ENCODE measurements at regions of chr18 and their contacts with region 1.

Region 1: DNA sequence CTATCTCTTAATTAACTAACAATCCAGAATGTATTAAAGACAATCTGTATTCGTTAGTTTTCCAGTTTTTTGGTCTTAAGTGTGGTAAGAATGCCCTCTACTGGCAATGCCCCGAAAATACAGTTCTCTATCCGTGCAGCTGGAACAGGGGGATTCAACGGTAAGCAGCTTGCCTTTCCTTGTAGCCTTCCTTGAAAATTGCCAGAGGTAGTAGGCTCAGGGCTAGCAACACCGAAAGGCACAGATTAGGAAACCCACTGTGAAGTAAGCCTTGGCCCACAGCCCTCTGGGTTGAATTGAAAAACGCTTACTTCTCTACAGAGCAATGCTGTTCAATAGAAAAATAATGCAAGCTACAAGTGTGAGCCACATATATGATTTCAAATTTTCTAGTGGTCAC is 17.1 kb upstream of the VPS4B start:
- DNase-seq: peak; percentile 25 to 52
- H3K4me3 ChIP-seq: no peak overlapping the region
- H3K27ac ChIP-seq: no peak overlapping the region
- H3K4me1 ChIP-seq: peaks cover 11% of the 10 kb centered on the region
- H3K27me3 ChIP-seq: no peaks in the 10 kb centered on the region
- CTCF ChIP-seq: peak; percentile 89

Region 2: GRCh38 chr18:63131106-63131958 is 308.0 kb before region 1 on chr18:
- CTCF ChIA-PET with region 1: no interaction called
- POLR2A ChIA-PET with region 1: no interaction called
- intact Hi-C with region 1: loop called (anchors 10 kb)
- DNase-seq: peak in 1 of 2 experiments; percentile 7
- H3K4me3 ChIP-seq: no peak overlapping the region
- H3K27ac ChIP-seq: no peak overlapping the region
- H3K4me1 ChIP-seq: no peaks in the 10 kb centered on the region
- H3K27me3 ChIP-seq: no peaks in the 10 kb centered on the region
- CTCF ChIP-seq: peak; percentile 68

Region 3: DNA sequence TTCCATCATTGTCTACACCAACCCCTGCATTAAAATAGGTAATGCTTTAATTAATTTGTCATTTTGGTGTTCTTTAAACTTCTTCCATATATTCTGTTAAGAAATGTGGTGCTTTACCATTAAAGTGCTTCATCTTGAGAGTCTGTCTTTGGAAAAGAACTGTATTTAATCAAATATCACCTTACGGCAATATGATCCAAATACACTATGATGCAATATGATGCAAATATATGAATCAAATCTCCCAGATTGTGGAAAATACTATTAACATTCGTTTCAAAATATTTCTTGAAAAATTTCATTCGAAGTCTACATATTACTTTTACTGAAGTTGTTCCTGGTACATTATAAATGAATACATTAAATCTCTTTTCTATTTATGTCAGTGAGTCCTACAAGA is 40.0 kb before region 1 on chr18:
- CTCF ChIA-PET with region 1: no interaction called
- POLR2A ChIA-PET with region 1: no interaction called
- intact Hi-C with region 1: loop called (anchors 1 kb)
- DNase-seq: no peak
- H3K4me3 ChIP-seq: no peak overlapping the region
- H3K27ac ChIP-seq: no peak overlapping the region
- H3K4me1 ChIP-seq: no peaks in the 10 kb centered on the region
- H3K27me3 ChIP-seq: no peaks in the 10 kb centered on the region
- CTCF ChIP-seq: no peak

Region 4: DNA sequence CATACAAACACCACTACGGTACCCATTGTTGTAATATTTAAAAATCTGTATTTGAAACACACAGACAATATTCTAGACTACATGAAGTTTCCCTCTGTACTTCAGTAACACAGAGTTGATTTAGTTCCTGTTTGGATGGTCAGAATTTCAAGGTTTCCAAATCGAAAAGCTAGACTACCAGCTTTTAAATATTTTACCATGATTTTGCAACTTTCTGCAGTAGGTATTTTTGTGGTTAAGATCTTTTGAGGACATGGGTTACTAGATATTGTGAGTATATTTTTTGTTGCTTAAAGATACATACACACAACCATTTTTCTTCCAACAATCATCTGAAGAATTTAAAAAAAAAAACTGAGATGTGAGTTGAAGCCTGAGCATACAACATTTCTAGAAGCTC is 48.3 kb after region 1 on chr18:
- CTCF ChIA-PET with region 1: no interaction called
- POLR2A ChIA-PET with region 1: no interaction called
- intact Hi-C with region 1: no loop called
- DNase-seq: no peak
- H3K4me3 ChIP-seq: no peak overlapping the region
- H3K27ac ChIP-seq: no peak overlapping the region
- H3K4me1 ChIP-seq: no peaks in the 10 kb centered on the region
- H3K27me3 ChIP-seq: no peaks in the 10 kb centered on the region
- CTCF ChIP-seq: no peak

Region 5: DNA sequence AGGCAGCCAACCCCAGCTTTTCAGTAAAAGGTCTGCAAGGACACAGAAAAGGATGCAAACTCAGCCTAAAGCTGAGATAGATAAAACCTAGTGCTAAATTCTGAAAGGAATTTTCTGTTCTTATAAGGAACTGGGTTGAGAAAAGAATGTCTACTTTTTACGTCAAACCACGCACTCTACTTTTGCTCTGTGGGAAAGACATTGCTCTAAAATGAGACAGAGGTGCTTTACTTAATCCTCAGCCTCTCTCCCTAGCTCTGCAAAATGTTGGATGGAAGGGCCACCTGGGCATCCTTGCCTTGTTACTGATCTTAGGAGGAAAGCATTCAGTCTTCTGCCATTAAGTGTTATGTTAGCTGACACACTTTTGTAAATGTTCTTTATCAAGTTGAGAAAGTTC is 781.6 kb after region 1 on chr18:
- CTCF ChIA-PET with region 1: no interaction called
- POLR2A ChIA-PET with region 1: no interaction called
- intact Hi-C with region 1: no loop called
- DNase-seq: no peak
- H3K4me3 ChIP-seq: no peak overlapping the region
- H3K27ac ChIP-seq: no peak overlapping the region
- H3K4me1 ChIP-seq: no peaks in the 10 kb centered on the region
- H3K27me3 ChIP-seq: no peaks in the 10 kb centered on the region
- CTCF ChIP-seq: no peak

Measured in PC-9 (cell line).